Activated T-helper 2 cell treated with anti-CD3 and anti-CD28 coated beads, Interferon-gamma antibody, Interleukin-2, Interleukin-4, amounts not matched to agents 10 μg/mL and 5 μg/mL and 100 μg/mL, durations not matched to agents 14 hours and 24 hours and 36 hours (primary cell): ENCODE measurements at regions of chrX and their contacts with region 1.

Region 1: GRCh38 chrX:38868941-38869401 is 67.7 kb downstream of the MID1IP1 start:
- DNase-seq: no peak
- H3K4me3 Mint-ChIP-seq: no peak overlapping the region
- H3K27ac Mint-ChIP-seq: no peak overlapping the region
- H3K4me1 Mint-ChIP-seq: no peaks in the 10 kb centered on the region
- H3K27me3 Mint-ChIP-seq: no peaks in the 10 kb centered on the region

Region 2: DNA sequence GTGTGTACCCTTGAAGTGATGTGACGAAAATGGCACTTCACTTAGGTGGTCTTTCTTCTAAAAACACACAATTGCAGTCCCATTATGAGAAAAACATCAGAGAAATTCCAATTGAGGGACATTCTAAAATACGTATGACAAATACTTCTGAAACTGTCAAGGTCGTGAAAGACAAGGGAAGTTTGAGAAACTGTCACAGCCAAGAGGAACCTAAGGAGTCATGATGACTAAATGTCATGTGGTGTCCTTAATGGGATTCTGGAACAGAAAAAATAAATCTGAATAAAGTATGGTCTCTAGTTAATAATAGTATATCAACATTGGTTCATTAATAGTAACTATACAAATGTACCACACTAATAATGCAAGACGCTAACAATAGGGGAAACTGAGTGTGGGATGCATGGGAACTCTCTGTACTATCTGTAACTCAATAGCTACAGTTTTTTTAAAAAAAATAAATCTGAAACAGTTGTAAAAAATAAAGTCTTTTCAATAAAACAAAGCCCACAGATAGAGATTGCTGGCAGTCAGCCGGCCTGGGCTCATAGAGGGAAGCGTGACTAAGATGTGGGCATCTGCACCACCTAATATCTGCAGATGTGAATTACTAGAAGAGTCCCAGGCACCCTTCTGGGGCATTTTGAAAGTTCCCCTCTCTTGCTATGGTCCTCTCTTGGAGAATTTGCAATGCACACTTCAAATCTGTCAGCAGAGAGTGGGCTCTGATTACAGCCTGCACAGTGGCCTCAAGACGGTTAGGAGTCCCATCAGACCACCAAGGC is 20.1 kb before region 1 on chrX:
- intact Hi-C with region 1: loop called (anchors 2 kb)
- DNase-seq: no peak
- H3K4me3 Mint-ChIP-seq: no peak overlapping the region
- H3K27ac Mint-ChIP-seq: no peak overlapping the region
- H3K4me1 Mint-ChIP-seq: peaks cover 7% of the 10 kb centered on the region
- H3K27me3 Mint-ChIP-seq: no peaks in the 10 kb centered on the region